ENCODE measurements at regions of chr11 and their contacts with region 1.

Region 1: GRCh38 chr11:67613960-67614715 is 7.4 kb downstream of the NDUFV1 start:
- DNase-seq: no peak
- H3K4me3 ChIP-seq: peak overlapping the region; percentile 49 to 64 (median 50)
- H3K27ac ChIP-seq: peak overlapping the region in 3 of 4 donors; percentile 9 to 63 (median 41)
- H3K4me1 ChIP-seq: peaks cover 9 to 23% (median 15%) of the 10 kb centered on the region in 4 donors
- H3K27me3 ChIP-seq: peaks cover 0 to 31% (median 10%) of the 10 kb centered on the region in 4 donors
- CTCF ChIP-seq: peak; percentile 45 to 69 (median 58)
- EP300 ChIP-seq: no peak
- POLR2A ChIP-seq: no peak

Region 2: DNA sequence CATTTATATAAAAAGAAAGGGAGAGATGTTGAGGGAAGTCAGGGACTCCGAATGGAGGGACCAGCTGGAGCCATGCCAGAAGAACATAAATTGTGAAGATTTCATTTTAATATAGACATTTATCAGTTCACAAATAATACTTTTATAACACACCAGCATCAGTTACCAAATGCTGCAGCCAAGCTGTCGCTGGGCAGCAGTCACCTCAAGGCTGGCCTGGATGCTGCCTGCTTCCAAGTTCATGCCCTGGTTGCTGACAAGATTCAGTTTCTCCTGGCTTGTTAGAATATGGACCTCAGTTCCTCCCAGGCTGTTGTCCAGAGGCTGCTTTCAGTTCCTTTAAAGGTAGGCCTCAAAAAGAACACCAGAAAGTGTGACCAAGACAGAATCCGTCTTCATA is 91.1 kb after region 1 on chr11:
- intact Hi-C with region 1: loop called (anchors 10 kb)
- DNase-seq: no peak
- H3K4me3 ChIP-seq: no peak overlapping the region
- H3K27ac ChIP-seq: no peak overlapping the region
- H3K4me1 ChIP-seq: no peaks in the 10 kb centered on the region
- H3K27me3 ChIP-seq: peaks cover 0 to 4% (median 0%) of the 10 kb centered on the region in 4 donors
- CTCF ChIP-seq: no peak
- EP300 ChIP-seq: no peak
- POLR2A ChIP-seq: no peak

Region 3: GRCh38 chr11:67732045-67732787 is 118.1 kb after region 1 on chr11:
- intact Hi-C with region 1: no loop called
- DNase-seq: no peak
- H3K4me3 ChIP-seq: peak overlapping the region; percentile 7 to 31 (median 21)
- H3K27ac ChIP-seq: no peak overlapping the region
- H3K4me1 ChIP-seq: peaks cover 0 to 8% (median 3%) of the 10 kb centered on the region in 4 donors
- H3K27me3 ChIP-seq: peaks cover 0 to 29% (median 7%) of the 10 kb centered on the region in 4 donors
- CTCF ChIP-seq: peak in 1 of 3 experiments; percentile 17
- EP300 ChIP-seq: no peak
- POLR2A ChIP-seq: no peak